Dorsolateral prefrontal cortex (tissue), 120 donors: ENCODE measurements at regions of chr6 and their contacts with region 1.

Region 1: GRCh38 chr6:27854421-27854820 is 57.8 kb downstream of the OR2B2 start:
- DNase-seq: no peak
- H3K4me3 ChIP-seq: no peak overlapping the region
- H3K27ac ChIP-seq: no peak overlapping the region
- H3K27me3 ChIP-seq: peaks cover 0 to 5% (median 0%) of the 10 kb centered on the region in 45 donors
- CTCF ChIP-seq: no peak

Region 2: GRCh38 chr6:27761391-27761790 is 93.0 kb before region 1 on chr6:
- intact Hi-C with region 1: loop called in 1 of 2 experiments (anchors 5 kb)
- DNase-seq: peak in 1 of 10 donors; percentile 41
- H3K4me3 ChIP-seq: peak overlapping the region in 40 of 59 donors; percentile 2 to 53 (median 29)
- H3K27ac ChIP-seq: peak overlapping the region in 10 of 59 donors; percentile 3 to 83 (median 46)
- H3K27me3 ChIP-seq: peaks cover 0 to 83% (median 39%) of the 10 kb centered on the region in 45 donors
- CTCF ChIP-seq: no peak